ENCODE measurements at regions of chr18 and their contacts with region 1.

Region 1: GRCh38 chr18:60377778-60378469 is 5.3 kb upstream of the MC4R start:
- DNase-seq: no peak
- H3K4me3 ChIP-seq: no peak overlapping the region
- H3K27ac ChIP-seq: no peak overlapping the region
- H3K4me1 ChIP-seq: no peaks in the 10 kb centered on the region
- H3K27me3 ChIP-seq: no peaks in the 10 kb centered on the region
- CTCF ChIP-seq: no peak

Region 2: GRCh38 chr18:60534538-60534937 is 156.6 kb after region 1 on chr18:
- CTCF ChIA-PET with region 1: no interaction called
- dilution Hi-C with region 1: no loop called
- in situ Hi-C with region 1: no loop called
- intact Hi-C with region 1: no loop called
- DNase-seq: peak; percentile 8
- H3K4me3 ChIP-seq: no peak overlapping the region
- H3K27ac ChIP-seq: no peak overlapping the region
- H3K4me1 ChIP-seq: peaks cover 5% of the 10 kb centered on the region
- H3K27me3 ChIP-seq: peaks cover 3% of the 10 kb centered on the region
- CTCF ChIP-seq: no peak

Region 3: DNA sequence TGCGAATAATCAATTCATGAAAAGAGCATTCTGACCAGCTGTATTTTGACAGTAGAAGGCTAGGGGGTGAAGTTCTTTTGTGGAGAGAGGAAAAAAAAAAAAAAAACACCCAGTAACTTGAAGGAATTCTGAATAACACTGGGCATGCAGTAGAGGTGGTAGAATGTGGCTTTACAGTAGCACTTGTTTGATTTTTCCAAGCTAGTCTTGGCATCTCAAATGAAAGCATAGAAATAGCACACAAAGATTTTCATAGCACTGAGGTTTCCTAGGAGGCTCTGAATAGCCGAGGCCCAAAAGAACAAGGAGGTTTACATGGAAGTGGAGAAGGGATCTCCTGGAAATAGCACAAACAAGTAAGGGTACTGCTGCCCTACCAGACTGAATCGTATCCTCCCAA is 485.1 kb after region 1 on chr18:
- CTCF ChIA-PET with region 1: interaction called, 10 read pairs
- dilution Hi-C with region 1: no loop called
- in situ Hi-C with region 1: no loop called
- intact Hi-C with region 1: no loop called
- DNase-seq: no peak
- H3K4me3 ChIP-seq: no peak overlapping the region
- H3K27ac ChIP-seq: no peak overlapping the region
- H3K4me1 ChIP-seq: no peaks in the 10 kb centered on the region
- H3K27me3 ChIP-seq: no peaks in the 10 kb centered on the region
- CTCF ChIP-seq: no peak